ENCODE measurements at regions of chr14 and their contacts with region 1.

Region 1: DNA sequence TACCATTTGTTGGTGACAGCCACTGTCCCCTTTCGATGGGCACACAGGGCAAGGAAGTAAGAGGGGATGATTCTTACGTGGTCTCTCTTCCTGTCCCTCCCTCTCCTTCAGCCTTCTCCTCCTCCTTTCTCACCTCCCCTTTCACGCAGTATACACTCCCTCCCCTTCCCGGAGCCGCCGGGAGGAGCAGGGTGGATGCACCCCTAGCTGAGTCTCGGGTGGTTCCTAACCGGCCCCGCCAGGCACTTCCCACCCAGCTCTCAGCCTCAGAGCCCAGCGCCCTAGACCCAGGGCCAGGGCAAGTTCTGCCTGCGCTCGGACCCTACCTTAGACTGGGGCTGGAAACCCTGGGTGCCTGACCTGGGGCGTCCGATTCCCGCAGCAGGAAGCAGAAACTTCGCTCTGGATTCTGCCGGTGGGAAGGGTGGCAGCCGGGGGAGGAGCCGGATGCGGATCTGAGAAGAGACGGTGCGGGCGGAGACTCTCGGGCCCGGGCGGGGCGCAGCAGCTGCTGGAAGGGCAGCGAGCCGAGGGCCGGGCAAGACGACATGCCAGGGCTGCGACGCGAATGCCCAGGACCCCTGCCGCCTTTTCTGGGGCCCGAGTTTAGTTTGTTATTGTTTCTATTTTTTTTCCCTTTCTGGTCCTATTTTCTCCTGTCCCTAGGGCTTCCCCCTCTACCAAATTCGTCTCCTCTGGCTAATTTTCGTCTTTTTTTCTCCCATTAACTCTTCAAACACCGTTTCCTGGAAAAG is at the start of gene TEP1:
- DNase-seq: peak; percentile 80
- H3K4me3 ChIP-seq: peak within 1 kb of the TSS; percentile 80 to 97 (median 86)
- H3K27ac ChIP-seq: peak within 1 kb of the TSS; percentile 85
- H3K4me1 ChIP-seq: peaks cover 17% of the 10 kb centered on the region
- H3K27me3 ChIP-seq: no peaks in the 10 kb centered on the region
- CTCF ChIP-seq: no peak
- POLR2A ChIP-seq: peak; percentile 78
- total RNA-seq, gene TEP1: 40.3 and 44.6 TPM in 2 replicates

Region 2: DNA sequence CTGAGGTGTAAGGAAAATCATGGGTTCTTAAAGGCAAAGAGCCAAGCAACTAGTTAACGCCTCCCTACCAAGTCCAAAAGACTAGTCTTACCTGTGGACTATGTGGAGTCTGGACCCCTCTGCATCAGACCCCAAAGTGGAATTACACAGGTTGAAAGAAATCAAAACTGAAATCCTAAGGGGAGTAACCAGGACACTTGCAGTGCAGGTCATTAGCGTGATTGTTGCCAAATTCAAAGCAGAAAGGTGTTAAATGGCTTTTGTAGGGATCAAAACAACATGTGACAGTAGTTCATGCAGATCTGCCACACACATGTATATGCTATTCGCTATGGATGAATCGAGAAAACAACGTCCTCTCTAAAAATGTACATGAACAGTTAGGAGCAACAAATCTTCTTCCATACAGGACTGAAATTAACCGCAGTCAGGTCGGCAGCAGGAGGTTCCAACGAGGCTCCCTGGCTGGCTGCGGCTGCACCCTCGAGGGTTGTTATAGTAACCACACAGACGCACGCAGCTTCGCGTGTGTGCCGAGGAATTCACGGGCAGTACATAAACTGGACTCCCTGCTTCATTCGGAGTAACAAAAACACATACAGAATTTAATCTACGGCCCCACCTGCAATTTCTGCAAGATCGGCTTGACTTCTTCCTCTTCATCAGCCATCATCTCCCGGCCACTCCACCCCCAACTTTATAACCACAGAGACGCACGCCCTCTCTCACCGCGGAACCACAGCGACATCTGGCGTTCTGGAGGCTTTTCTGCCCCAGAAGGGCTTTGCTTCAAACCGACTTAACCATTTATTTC is 107.8 kb before region 1 on chr14 and contains the start of gene TTC5:
- CTCF ChIA-PET with region 1: interaction called, 3 read pairs
- POLR2A ChIA-PET with region 1: no interaction called
- dilution Hi-C with region 1: no loop called
- intact Hi-C with region 1: loop called (anchors 5 kb)
- DNase-seq: peak; percentile 92
- H3K4me3 ChIP-seq: peak within 1 kb of the TSS; percentile 63 to 100 (median 99)
- H3K27ac ChIP-seq: peak within 1 kb of the TSS; percentile 50
- H3K4me1 ChIP-seq: peaks cover 9% of the 10 kb centered on the region
- H3K27me3 ChIP-seq: no peaks in the 10 kb centered on the region
- CTCF ChIP-seq: peak; percentile 92 to 97
- POLR2A ChIP-seq: peak; percentile 77
- total RNA-seq, gene TTC5: 21.3 and 22.9 TPM in 2 replicates

Region 3: GRCh38 chr14:20317720-20318119 is 95.5 kb before region 1 on chr14:
- CTCF ChIA-PET with region 1: no interaction called
- POLR2A ChIA-PET with region 1: no interaction called
- dilution Hi-C with region 1: no loop called
- intact Hi-C with region 1: no loop called
- DNase-seq: no peak
- H3K4me3 ChIP-seq: no peak overlapping the region
- H3K27ac ChIP-seq: no peak overlapping the region
- H3K4me1 ChIP-seq: no peaks in the 10 kb centered on the region
- H3K27me3 ChIP-seq: no peaks in the 10 kb centered on the region
- CTCF ChIP-seq: no peak
- POLR2A ChIP-seq: no peak

Region 4: GRCh38 chr14:20365928-20366327 is 47.3 kb before region 1 on chr14:
- CTCF ChIA-PET with region 1: no interaction called
- POLR2A ChIA-PET with region 1: no interaction called
- dilution Hi-C with region 1: no loop called
- intact Hi-C with region 1: no loop called
- DNase-seq: no peak
- H3K4me3 ChIP-seq: no peak overlapping the region
- H3K27ac ChIP-seq: no peak overlapping the region
- H3K4me1 ChIP-seq: no peaks in the 10 kb centered on the region
- H3K27me3 ChIP-seq: no peaks in the 10 kb centered on the region
- CTCF ChIP-seq: no peak
- POLR2A ChIP-seq: no peak

Region 5: DNA sequence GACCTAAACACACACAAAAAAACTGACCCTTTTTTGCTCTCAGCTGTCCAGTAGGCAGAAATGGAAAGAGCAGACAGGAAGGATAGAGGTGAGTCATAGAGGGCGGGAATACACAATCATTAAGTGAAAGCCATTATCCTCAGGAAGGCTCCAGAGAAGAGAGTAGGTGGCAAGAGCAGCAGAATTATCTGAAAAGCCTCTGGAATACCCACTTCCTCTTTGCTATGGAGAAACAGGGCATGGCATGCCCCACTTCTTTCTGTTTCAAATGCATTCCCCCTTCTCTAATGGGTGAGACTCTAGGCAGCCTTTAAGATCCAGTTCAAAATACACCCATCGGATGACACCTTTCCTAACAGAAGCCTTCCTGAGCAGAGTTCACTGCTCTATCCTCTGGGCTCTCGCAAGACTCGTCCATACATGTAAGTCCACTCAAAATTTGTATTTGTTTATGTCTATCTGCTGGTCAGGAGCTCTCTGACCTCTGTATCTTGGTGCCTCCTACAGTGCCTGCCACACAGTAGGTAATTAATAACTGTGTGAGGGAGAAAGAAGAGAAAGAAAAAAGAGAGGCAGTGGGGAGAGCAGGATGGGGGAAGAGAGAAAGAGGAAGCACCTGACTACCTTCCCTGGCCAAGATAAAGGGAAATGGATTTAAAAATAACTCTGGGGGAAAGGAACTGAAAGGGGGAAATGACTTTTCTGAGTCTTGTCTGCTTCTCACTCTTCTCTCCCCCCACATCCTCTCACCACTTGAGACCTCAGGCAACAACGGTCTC is 14.2 kb after region 1 on chr14:
- CTCF ChIA-PET with region 1: interaction called, 30 read pairs
- POLR2A ChIA-PET with region 1: no interaction called
- dilution Hi-C with region 1: no loop called
- intact Hi-C with region 1: loop called (anchors 1 kb)
- DNase-seq: peak; percentile 72
- H3K4me3 ChIP-seq: peak overlapping the region in 1 of 3 experiments; percentile 56
- H3K27ac ChIP-seq: peak overlapping the region; percentile 74
- H3K4me1 ChIP-seq: peaks cover 18% of the 10 kb centered on the region
- H3K27me3 ChIP-seq: no peaks in the 10 kb centered on the region
- CTCF ChIP-seq: no peak
- POLR2A ChIP-seq: no peak

Region 6: DNA sequence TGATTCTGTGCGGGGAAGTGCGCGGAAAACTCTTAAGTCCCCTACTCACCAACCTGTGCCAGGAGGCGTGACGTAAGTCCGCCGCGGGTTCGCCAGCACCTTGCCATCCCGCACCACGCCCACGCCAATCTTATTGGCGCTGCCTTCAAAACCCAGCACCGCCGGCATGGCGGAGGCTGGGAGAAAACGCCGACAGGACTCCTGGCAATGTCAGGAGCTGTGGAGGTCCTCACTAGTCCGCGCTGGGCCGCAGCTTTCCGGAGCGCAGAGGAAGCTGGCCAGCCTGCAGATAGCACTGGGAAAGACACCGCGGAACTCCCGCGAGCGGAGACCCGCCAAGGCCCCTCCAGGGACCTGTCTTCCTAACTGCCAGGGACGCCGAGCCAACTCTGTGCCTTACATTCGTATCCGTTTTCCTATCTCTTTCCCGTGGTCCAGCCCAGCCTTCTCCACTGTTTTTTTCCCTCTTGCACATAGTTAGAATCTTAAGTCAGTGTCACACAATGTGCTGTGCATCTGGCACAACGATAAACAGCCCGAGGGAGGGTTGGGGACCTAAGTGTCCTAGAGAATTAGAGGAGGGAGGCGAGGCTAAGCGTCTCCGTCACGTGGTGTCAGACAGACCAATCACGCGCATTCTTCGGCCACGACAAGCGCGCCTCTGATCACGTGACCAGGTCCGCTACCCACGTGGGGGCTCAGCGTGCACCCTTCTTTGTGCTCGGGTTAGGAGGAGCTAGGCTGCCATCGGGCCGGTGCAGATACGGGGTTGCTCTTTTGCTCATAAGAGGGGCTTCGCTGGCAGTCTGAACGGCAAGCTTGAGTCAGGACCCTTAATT is 41.5 kb after region 1 on chr14 and contains the starts of genes APEX1 and OSGEP:
- CTCF ChIA-PET with region 1: interaction called, 70 read pairs
- POLR2A ChIA-PET with region 1: interaction called, 10 read pairs
- dilution Hi-C with region 1: no loop called
- intact Hi-C with region 1: loop called (anchors 1 kb)
- DNase-seq: peak; percentile 99
- H3K4me3 ChIP-seq: peak within 1 kb of the TSS; percentile 85 to 99 (median 90)
- H3K27ac ChIP-seq: peak within 1 kb of the TSS; percentile 96
- H3K4me1 ChIP-seq: peaks cover 15% of the 10 kb centered on the region
- H3K27me3 ChIP-seq: no peaks in the 10 kb centered on the region
- CTCF ChIP-seq: no peak
- POLR2A ChIP-seq: peak; percentile 78
- total RNA-seq, gene APEX1: 227 and 231 TPM in 2 replicates
- total RNA-seq, gene OSGEP: 39.1 and 41.8 TPM in 2 replicates

Region 7: DNA sequence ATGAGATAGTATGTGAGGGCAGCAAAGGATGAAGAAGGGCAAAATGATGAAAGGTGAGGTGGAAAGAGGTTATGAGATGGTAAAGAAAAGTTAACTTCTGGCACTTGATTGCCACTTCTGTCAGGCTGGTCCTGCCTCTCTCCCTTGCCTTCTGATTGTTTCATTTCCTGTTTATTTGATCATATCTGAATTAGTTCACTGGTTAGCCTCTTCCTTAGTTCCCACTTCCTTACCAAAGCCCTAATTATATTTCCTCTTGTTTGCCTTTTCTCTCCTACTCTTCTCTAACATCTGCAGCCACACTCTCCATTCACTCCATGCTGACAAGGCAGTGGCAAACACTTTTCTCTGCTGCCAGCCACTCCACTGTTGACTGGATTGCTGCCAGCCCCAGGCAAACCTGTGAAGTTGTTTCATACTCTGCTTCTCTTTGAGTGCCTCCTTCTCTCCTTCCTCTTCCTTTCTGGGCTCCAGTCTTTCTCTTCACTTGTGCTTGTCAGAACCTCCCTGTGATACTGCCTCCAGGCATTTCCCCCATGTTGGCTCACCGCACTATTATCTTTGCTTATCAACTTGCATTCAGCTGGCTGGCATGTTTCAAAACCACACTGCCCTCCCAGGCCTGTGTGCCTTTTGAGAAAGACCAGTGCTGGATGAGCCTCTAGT is 64.1 kb after region 1 on chr14:
- CTCF ChIA-PET with region 1: interaction called, 13 read pairs
- POLR2A ChIA-PET with region 1: interaction called, 5 read pairs
- dilution Hi-C with region 1: no loop called
- intact Hi-C with region 1: no loop called
- DNase-seq: peak; percentile 69
- H3K4me3 ChIP-seq: peak overlapping the region in 1 of 3 experiments; percentile 20
- H3K27ac ChIP-seq: peak overlapping the region; percentile 77
- H3K4me1 ChIP-seq: peaks cover 28% of the 10 kb centered on the region
- H3K27me3 ChIP-seq: no peaks in the 10 kb centered on the region
- CTCF ChIP-seq: no peak
- POLR2A ChIP-seq: peak; percentile 68

Region 8: GRCh38 chr14:20613094-20614037 is 200.1 kb after region 1 on chr14:
- CTCF ChIA-PET with region 1: interaction called, 110 read pairs
- POLR2A ChIA-PET with region 1: no interaction called
- dilution Hi-C with region 1: no loop called
- intact Hi-C with region 1: loop called (anchors 1 kb)
- DNase-seq: peak; percentile 97
- H3K4me3 ChIP-seq: peak overlapping the region; percentile 48 to 86 (median 70)
- H3K27ac ChIP-seq: peak overlapping the region; percentile 27
- H3K4me1 ChIP-seq: peaks cover 11% of the 10 kb centered on the region
- H3K27me3 ChIP-seq: peaks cover 3 to 6% of the 10 kb centered on the region in 2 experiments
- CTCF ChIP-seq: peak; percentile 55 to 65
- POLR2A ChIP-seq: no peak